OCI-LY7 (cell line): ENCODE measurements at regions of chr4 and their contacts with region 1.

Region 1: DNA sequence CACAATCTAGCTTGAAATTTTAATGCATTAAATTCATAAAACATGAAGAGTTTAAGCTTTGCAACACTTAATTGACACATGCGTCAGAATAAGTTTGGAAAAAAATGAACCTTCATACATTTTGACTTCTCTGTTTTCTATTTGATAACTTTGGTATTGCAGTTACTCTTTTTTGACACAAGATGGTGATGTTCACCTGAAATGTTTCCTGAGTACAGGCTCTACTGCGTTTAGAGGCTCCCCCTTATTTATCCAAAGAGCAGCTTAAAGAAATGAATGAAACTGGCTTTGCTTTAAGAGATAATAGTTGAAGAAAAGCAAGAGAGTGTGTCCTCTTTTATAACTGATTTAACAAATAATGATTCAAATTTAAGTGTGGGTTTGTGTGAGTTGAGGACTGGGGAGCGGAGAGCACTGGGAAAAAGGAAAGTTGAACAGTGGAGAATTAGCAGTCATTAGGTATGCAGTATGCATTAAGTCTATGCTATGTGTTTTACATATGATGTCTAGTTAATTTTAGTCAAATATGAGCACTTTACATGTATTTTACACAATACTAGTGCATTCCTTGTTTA is 180.6 kb upstream of the NUDT6 start:
- DNase-seq: peak; percentile 50
- H3K4me3 ChIP-seq: no peak overlapping the region
- H3K27ac ChIP-seq: no peak overlapping the region
- H3K4me1 ChIP-seq: no peaks in the 10 kb centered on the region
- CTCF ChIP-seq: peak; percentile 92

Region 2: GRCh38 chr4:122898370-122899150 is 204.4 kb before region 1 on chr4:
- CTCF ChIA-PET with region 1: no interaction called
- POLR2A ChIA-PET with region 1: no interaction called
- intact Hi-C with region 1: no loop called
- DNase-seq: no peak
- H3K4me3 ChIP-seq: no peak overlapping the region
- H3K27ac ChIP-seq: no peak overlapping the region
- H3K4me1 ChIP-seq: no peaks in the 10 kb centered on the region
- CTCF ChIP-seq: no peak

Region 3: DNA sequence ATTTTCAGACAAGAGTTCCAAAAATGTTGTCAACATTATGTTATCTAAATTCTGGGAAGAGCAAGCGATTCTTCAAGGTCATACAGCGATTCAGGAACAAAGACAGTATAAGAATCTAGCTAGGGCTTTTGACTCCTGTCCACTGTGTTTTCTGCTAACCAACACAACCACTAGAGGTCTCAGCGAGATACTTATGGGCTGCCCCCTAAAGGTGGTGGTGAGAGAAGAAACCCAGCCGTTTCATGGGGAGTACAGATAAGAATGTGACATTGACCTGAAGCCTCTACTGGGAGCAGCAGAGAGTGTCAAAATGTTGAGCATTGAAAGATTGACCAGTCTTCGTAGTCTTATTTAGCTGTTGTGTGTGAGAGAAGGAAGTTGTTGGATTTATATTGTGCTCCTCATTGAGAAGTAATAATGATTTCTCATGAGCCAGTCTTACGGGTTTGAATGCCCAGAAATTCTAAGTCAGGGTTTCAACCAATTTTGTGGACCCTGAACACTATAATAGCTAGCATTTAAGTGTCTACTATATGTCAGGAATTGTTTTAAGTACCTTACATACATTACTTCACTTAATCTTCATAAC is 461.9 kb after region 1 on chr4:
- CTCF ChIA-PET with region 1: no interaction called
- POLR2A ChIA-PET with region 1: interaction called, 3 read pairs
- intact Hi-C with region 1: loop called (anchors 10 kb)
- DNase-seq: peak; percentile 89
- H3K4me3 ChIP-seq: no peak overlapping the region
- H3K27ac ChIP-seq: no peak overlapping the region
- H3K4me1 ChIP-seq: no peaks in the 10 kb centered on the region
- CTCF ChIP-seq: peak; percentile 100

Region 4: GRCh38 chr4:124253080-124253479 is 1150.1 kb after region 1 on chr4:
- CTCF ChIA-PET with region 1: no interaction called
- POLR2A ChIA-PET with region 1: no interaction called
- intact Hi-C with region 1: loop called (anchors 10 kb)
- DNase-seq: no peak
- H3K4me3 ChIP-seq: no peak overlapping the region
- H3K27ac ChIP-seq: no peak overlapping the region
- H3K4me1 ChIP-seq: no peaks in the 10 kb centered on the region
- CTCF ChIP-seq: no peak